ENCODE measurements at regions of chr4 and their contacts with region 1.

Region 1: GRCh38 chr4:76993787-76994641 is 44.5 kb downstream of the SEPTIN11 start:
- DNase-seq: peak; percentile 75 to 89 (median 80)
- H3K4me3 ChIP-seq: peak overlapping the region in 1 of 2 donors; percentile 5
- H3K4me3 Mint-ChIP-seq: peak overlapping the region; percentile 71 to 88 (median 81)
- H3K27ac ChIP-seq: no peak overlapping the region
- H3K27ac Mint-ChIP-seq: peak overlapping the region; percentile 83 to 96 (median 90)
- H3K4me1 ChIP-seq: peaks cover 64% of the 10 kb centered on the region
- H3K4me1 Mint-ChIP-seq: peaks cover 39 to 65% (median 51%) of the 10 kb centered on the region in 4 donors
- H3K27me3 ChIP-seq: no peaks in the 10 kb centered on the region
- H3K27me3 Mint-ChIP-seq: peaks cover 0 to 1% of the 10 kb centered on the region in 2 donors

Region 2: GRCh38 chr4:76624241-76624681 is 369.8 kb before region 1 on chr4:
- CTCF ChIA-PET with region 1: no interaction called
- POLR2A ChIA-PET with region 1: no interaction called
- intact Hi-C with region 1: no loop called
- DNase-seq: no peak
- H3K4me3 ChIP-seq: no peak overlapping the region
- H3K4me3 Mint-ChIP-seq: no peak overlapping the region
- H3K27ac ChIP-seq: no peak overlapping the region
- H3K27ac Mint-ChIP-seq: no peak overlapping the region
- H3K4me1 ChIP-seq: no peaks in the 10 kb centered on the region
- H3K4me1 Mint-ChIP-seq: peaks cover 0 to 4% (median 0%) of the 10 kb centered on the region in 4 donors
- H3K27me3 ChIP-seq: no peaks in the 10 kb centered on the region
- H3K27me3 Mint-ChIP-seq: peaks cover 19 to 24% of the 10 kb centered on the region in 2 donors

Region 3: GRCh38 chr4:76896731-76897535 is 97.1 kb before region 1 on chr4:
- CTCF ChIA-PET with region 1: no interaction called
- POLR2A ChIA-PET with region 1: interaction called, 3 read pairs
- intact Hi-C with region 1: loop called (anchors 5 kb)
- DNase-seq: peak; percentile 33 to 41 (median 35)
- H3K4me3 ChIP-seq: peak overlapping the region in 1 of 2 donors; percentile 49
- H3K4me3 Mint-ChIP-seq: peak overlapping the region in 6 of 8 donors; percentile 29 to 67 (median 46)
- H3K27ac ChIP-seq: no peak overlapping the region
- H3K27ac Mint-ChIP-seq: no peak overlapping the region
- H3K4me1 ChIP-seq: peaks cover 4% of the 10 kb centered on the region
- H3K4me1 Mint-ChIP-seq: peaks cover 8 to 14% (median 10%) of the 10 kb centered on the region in 4 donors
- H3K27me3 ChIP-seq: peaks cover 23% of the 10 kb centered on the region
- H3K27me3 Mint-ChIP-seq: peaks cover 27 to 37% of the 10 kb centered on the region in 2 donors

Region 4: GRCh38 chr4:76949276-76950051 is 44.5 kb before region 1 on chr4 and contains the start of gene SEPTIN11:
- CTCF ChIA-PET with region 1: interaction called, 4 read pairs
- POLR2A ChIA-PET with region 1: interaction called, 36 read pairs
- intact Hi-C with region 1: loop called (anchors 1 kb)
- DNase-seq: peak; percentile 83 to 90 (median 85)
- H3K4me3 ChIP-seq: peak within 1 kb of the TSS; percentile 83 to 86
- H3K4me3 Mint-ChIP-seq: peak within 1 kb of the TSS; percentile 90 to 94 (median 93)
- H3K27ac ChIP-seq: peak within 1 kb of the TSS; percentile 59
- H3K27ac Mint-ChIP-seq: peak within 1 kb of the TSS; percentile 79 to 94 (median 91)
- H3K4me1 ChIP-seq: peaks cover 23% of the 10 kb centered on the region
- H3K4me1 Mint-ChIP-seq: peaks cover 8 to 41% (median 23%) of the 10 kb centered on the region in 4 donors
- H3K27me3 ChIP-seq: no peaks in the 10 kb centered on the region
- H3K27me3 Mint-ChIP-seq: no peaks in the 10 kb centered on the region
- total RNA-seq, gene SEPTIN11: 25.2 to 30.2 TPM

Region 5: GRCh38 chr4:77007358-77008191 is 13.6 kb after region 1 on chr4:
- CTCF ChIA-PET with region 1: interaction called, 4 read pairs
- POLR2A ChIA-PET with region 1: interaction called, 62 read pairs
- intact Hi-C with region 1: loop called (anchors 1 kb)
- DNase-seq: peak; percentile 22 to 68 (median 36)
- H3K4me3 ChIP-seq: no peak overlapping the region
- H3K4me3 Mint-ChIP-seq: peak overlapping the region in 7 of 8 donors; percentile 43 to 78 (median 66)
- H3K27ac ChIP-seq: peak overlapping the region; percentile 22
- H3K27ac Mint-ChIP-seq: peak overlapping the region; percentile 75 to 95 (median 89)
- H3K4me1 ChIP-seq: peaks cover 35% of the 10 kb centered on the region
- H3K4me1 Mint-ChIP-seq: peaks cover 44 to 67% (median 52%) of the 10 kb centered on the region in 4 donors
- H3K27me3 ChIP-seq: no peaks in the 10 kb centered on the region
- H3K27me3 Mint-ChIP-seq: no peaks in the 10 kb centered on the region

Region 6: GRCh38 chr4:77025643-77026321 is 31.8 kb after region 1 on chr4:
- CTCF ChIA-PET with region 1: interaction called, 3 read pairs
- POLR2A ChIA-PET with region 1: interaction called, 10 read pairs
- intact Hi-C with region 1: loop called (anchors 2 kb)
- DNase-seq: no peak
- H3K4me3 ChIP-seq: no peak overlapping the region
- H3K4me3 Mint-ChIP-seq: no peak overlapping the region
- H3K27ac ChIP-seq: no peak overlapping the region
- H3K27ac Mint-ChIP-seq: no peak overlapping the region
- H3K4me1 ChIP-seq: peaks cover 9% of the 10 kb centered on the region
- H3K4me1 Mint-ChIP-seq: peaks cover 12 to 14% (median 12%) of the 10 kb centered on the region in 4 donors
- H3K27me3 ChIP-seq: no peaks in the 10 kb centered on the region
- H3K27me3 Mint-ChIP-seq: no peaks in the 10 kb centered on the region

Region 7: GRCh38 chr4:77031544-77031943 is 37.5 kb after region 1 on chr4:
- CTCF ChIA-PET with region 1: interaction called, 3 read pairs
- POLR2A ChIA-PET with region 1: interaction called, 10 read pairs
- intact Hi-C with region 1: loop called (anchors 2 kb)
- DNase-seq: peak in 4 of 5 donors; percentile 15 to 43 (median 29)
- H3K4me3 ChIP-seq: no peak overlapping the region
- H3K4me3 Mint-ChIP-seq: peak overlapping the region in 5 of 8 donors; percentile 8 to 55 (median 37)
- H3K27ac ChIP-seq: no peak overlapping the region
- H3K27ac Mint-ChIP-seq: peak overlapping the region; percentile 19 to 73 (median 60)
- H3K4me1 ChIP-seq: peaks cover 28% of the 10 kb centered on the region
- H3K4me1 Mint-ChIP-seq: peaks cover 26 to 32% (median 29%) of the 10 kb centered on the region in 4 donors
- H3K27me3 ChIP-seq: no peaks in the 10 kb centered on the region
- H3K27me3 Mint-ChIP-seq: no peaks in the 10 kb centered on the region

Measured in CD4-positive, alpha-beta memory T cell (primary cell).